ENCODE measurements at regions of chr12 and their contacts with region 1.

Region 1: GRCh38 chr12:110513842-110514241 is 11.7 kb downstream of the RAD9B start:
- ATAC-seq: no peak
- H3K4me3 ChIP-seq: no peak overlapping the region
- H3K27ac ChIP-seq: no peak overlapping the region
- H3K4me1 ChIP-seq: no peaks in the 10 kb centered on the region

Region 2: GRCh38 chr12:110234755-110235154 is 279.1 kb before region 1 on chr12:
- in situ Hi-C with region 1: no loop called
- ATAC-seq: peak in 3 of 8 experiments; percentile 13 to 59 (median 47)
- H3K4me3 ChIP-seq: no peak overlapping the region
- H3K27ac ChIP-seq: no peak overlapping the region
- H3K4me1 ChIP-seq: peaks cover 5 to 15% of the 10 kb centered on the region in 2 donors

Region 3: DNA sequence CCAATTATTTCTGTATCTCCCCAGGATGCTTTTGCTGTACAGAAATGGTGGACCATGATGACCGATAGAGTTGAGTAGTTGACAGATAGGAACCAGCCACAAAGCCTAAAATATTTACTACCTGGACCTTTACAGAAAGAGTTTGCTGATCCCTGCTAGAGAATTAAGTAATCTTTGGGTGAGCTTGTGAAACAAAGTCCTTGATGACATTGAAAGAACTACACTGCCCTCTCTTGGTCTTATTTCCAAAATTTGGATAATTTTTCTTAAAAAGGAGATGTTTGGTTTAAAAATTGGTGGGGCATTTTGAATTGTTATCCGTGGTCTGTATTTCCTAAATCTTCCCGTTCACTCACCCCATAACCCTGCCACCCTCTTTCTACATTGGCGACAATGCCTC is 86.4 kb after region 1 on chr12:
- in situ Hi-C with region 1: loop called in 2 of 9 experiments (anchors 10 to 25 kb)
- ATAC-seq: no peak
- H3K4me3 ChIP-seq: no peak overlapping the region
- H3K27ac ChIP-seq: no peak overlapping the region
- H3K4me1 ChIP-seq: no peaks in the 10 kb centered on the region

Region 4: GRCh38 chr12:110704748-110705147 is 190.9 kb after region 1 on chr12:
- in situ Hi-C with region 1: no loop called
- ATAC-seq: peak in 1 of 8 experiments; percentile 42
- H3K4me3 ChIP-seq: no peak overlapping the region
- H3K27ac ChIP-seq: no peak overlapping the region
- H3K4me1 ChIP-seq: no peaks in the 10 kb centered on the region